GM12878 (cell line): ENCODE measurements at regions of chr7 and their contacts with region 1.

Region 1: DNA sequence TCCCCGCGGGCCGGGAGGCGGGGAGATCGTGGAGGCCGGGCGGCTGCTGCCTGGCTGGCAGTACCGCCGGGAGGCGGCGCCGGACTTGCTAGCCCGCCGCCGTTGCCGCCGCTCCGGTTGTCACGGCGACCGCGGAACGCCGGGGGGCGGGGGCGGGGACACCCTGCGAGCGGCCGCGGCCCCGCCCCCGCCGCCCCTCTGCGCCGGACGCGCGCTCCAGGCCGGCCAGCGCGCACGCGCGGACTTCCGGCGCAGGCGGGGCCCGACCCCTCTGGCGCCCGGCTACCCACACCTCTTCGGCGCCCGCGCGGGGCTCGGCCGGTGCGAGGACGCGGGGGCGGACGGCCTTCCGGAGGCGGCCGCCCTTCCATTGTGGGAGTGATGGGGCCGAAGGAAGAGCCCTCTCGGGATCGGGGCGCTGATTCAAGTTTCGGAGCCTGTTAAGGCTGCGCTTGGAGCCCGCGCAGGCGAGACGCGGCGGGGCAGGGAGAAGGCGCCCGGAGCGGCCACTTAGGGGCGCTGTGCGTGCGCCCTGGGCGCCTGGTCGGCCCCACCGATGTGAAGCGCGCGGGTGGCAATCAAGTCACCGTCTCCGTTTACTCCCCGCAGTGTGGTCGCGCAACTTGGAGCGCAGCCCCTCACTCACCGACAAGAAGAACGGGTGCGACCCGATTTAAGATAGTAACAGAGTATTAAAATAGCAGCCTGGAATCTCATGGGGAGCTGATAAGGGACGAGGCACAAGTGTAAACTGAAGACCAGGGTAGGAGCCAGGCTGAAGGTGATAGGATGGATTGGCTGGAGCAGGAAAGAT is 448 bp upstream of the DPY19L1 start:
- DNase-seq: no peak
- ATAC-seq: peak; percentile 83
- H3K4me3 ChIP-seq: peak overlapping the region; percentile 87
- H3K27ac ChIP-seq: peak overlapping the region; percentile 18; the same call in 1 of the 2 replicates
- H3K4me1 ChIP-seq: peaks cover 10% of the 10 kb centered on the region
- H3K27me3 ChIP-seq: no peaks in the 10 kb centered on the region
- CTCF ChIP-seq: peak; percentile 76 to 78 (median 78)
- EP300 ChIP-seq: no peak
- POLR2A ChIP-seq: peak; percentile 56; the same call in 1 of the 2 replicates
- RAD21 ChIP-seq: peak; percentile 37

Region 2: GRCh38 chr7:34438436-34438835 is 599.3 kb before region 1 on chr7:
- CTCF ChIA-PET with region 1: no interaction called
- POLR2A ChIA-PET with region 1: no interaction called
- RAD21 ChIA-PET with region 1: no interaction called
- SMC1A ChIA-PET with region 1: no interaction called
- in situ Hi-C with region 1: no loop called
- intact Hi-C with region 1: no loop called
- DNase-seq: no peak
- ATAC-seq: peak; percentile 78
- H3K4me3 ChIP-seq: no peak overlapping the region
- H3K27ac ChIP-seq: no peak overlapping the region
- H3K4me1 ChIP-seq: no peaks in the 10 kb centered on the region
- H3K27me3 ChIP-seq: no peaks in the 10 kb centered on the region
- CTCF ChIP-seq: no peak
- EP300 ChIP-seq: no peak
- POLR2A ChIP-seq: no peak
- RAD21 ChIP-seq: no peak

Region 3: GRCh38 chr7:34734771-34735170 is 303.0 kb before region 1 on chr7:
- CTCF ChIA-PET with region 1: interaction called, 13 read pairs
- POLR2A ChIA-PET with region 1: no interaction called
- RAD21 ChIA-PET with region 1: interaction called, 7 read pairs
- SMC1A ChIA-PET with region 1: interaction called, 4 read pairs
- in situ Hi-C with region 1: no loop called
- intact Hi-C with region 1: no loop called
- DNase-seq: no peak
- ATAC-seq: peak; percentile 51
- H3K4me3 ChIP-seq: no peak overlapping the region
- H3K27ac ChIP-seq: no peak overlapping the region
- H3K4me1 ChIP-seq: no peaks in the 10 kb centered on the region
- H3K27me3 ChIP-seq: no peaks in the 10 kb centered on the region
- CTCF ChIP-seq: no peak
- EP300 ChIP-seq: no peak
- POLR2A ChIP-seq: no peak
- RAD21 ChIP-seq: no peak

Region 4: GRCh38 chr7:34823640-34824258 is 214.0 kb before region 1 on chr7:
- CTCF ChIA-PET with region 1: interaction called, 35 read pairs
- POLR2A ChIA-PET with region 1: no interaction called
- RAD21 ChIA-PET with region 1: interaction called, 28 read pairs
- SMC1A ChIA-PET with region 1: interaction called, 21 read pairs
- in situ Hi-C with region 1: no loop called
- intact Hi-C with region 1: loop called (anchors 1 kb)
- DNase-seq: no peak
- ATAC-seq: peak; percentile 87
- H3K4me3 ChIP-seq: no peak overlapping the region
- H3K27ac ChIP-seq: no peak overlapping the region
- H3K4me1 ChIP-seq: no peaks in the 10 kb centered on the region
- H3K27me3 ChIP-seq: no peaks in the 10 kb centered on the region
- CTCF ChIP-seq: peak; percentile 74 to 86 (median 79)
- EP300 ChIP-seq: no peak
- POLR2A ChIP-seq: no peak
- RAD21 ChIP-seq: peak; percentile 74

Region 5: DNA sequence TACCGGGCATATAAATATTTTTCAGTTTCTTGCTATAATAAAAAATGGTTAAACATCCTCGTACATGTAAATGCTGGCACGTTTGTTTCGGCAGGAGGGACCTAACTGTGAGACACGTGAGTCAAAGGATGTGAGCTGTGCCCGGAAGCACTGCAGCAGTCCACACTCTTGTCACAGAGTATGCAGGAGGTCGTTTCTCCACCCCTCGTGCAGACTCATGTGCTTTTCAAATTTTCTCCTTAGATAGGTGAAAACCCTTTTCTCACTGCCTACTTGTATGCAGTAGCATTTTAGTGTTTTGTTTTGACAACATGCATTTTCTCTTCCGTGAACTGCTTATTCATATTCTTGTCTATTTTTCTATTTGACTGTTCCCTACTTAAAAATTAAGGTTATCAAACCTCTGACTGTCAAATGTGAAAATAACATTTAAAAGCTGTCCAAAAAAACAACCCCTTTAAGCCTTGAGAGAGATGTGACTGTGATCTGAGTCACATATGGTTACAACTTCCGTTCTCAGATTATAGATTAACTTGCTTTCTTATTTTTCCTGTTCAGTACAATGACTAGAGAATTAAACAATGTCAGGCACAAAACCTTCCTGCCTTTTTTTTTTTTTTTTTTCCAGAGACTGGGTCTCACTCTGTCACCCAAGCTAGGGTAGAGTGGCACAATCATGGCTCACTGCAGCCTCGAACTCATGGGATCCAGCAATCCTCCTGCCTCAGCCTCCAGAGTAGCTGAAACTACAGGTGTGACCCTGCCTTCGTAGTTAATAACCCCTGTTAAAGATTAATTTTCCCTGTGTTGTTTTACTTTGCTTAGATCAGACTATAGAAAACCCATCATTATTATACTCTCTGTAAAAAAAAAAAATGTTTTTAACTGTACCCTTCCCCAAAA is 45.5 kb before region 1 on chr7:
- CTCF ChIA-PET with region 1: interaction called, 4 read pairs
- POLR2A ChIA-PET with region 1: no interaction called
- RAD21 ChIA-PET with region 1: interaction called, 5 read pairs
- SMC1A ChIA-PET with region 1: interaction called, 8 read pairs
- in situ Hi-C with region 1: no loop called
- intact Hi-C with region 1: loop called (anchors 2 kb)
- DNase-seq: peak; percentile 23
- ATAC-seq: peak; percentile 87
- H3K4me3 ChIP-seq: no peak overlapping the region
- H3K27ac ChIP-seq: no peak overlapping the region
- H3K4me1 ChIP-seq: no peaks in the 10 kb centered on the region
- H3K27me3 ChIP-seq: no peaks in the 10 kb centered on the region
- CTCF ChIP-seq: no peak
- EP300 ChIP-seq: no peak
- POLR2A ChIP-seq: no peak
- RAD21 ChIP-seq: no peak